ENCODE measurements at regions of chr1 and their contacts with region 1.

Region 1: GRCh38 chr1:180926164-180926981 is 13.7 kb downstream of the KIAA1614 start:
- DNase-seq: no peak
- H3K4me3 ChIP-seq: no peak overlapping the region
- H3K27ac ChIP-seq: no peak overlapping the region
- H3K4me1 ChIP-seq: peaks cover 32 to 59% (median 43%) of the 10 kb centered on the region in 4 experiments
- H3K27me3 ChIP-seq: no peaks in the 10 kb centered on the region; a peak in 1 of 7 replicates
- CTCF ChIP-seq: no peak
- EP300 ChIP-seq: no peak
- POLR2A ChIP-seq: no peak
- RAD21 ChIP-seq: no peak

Region 2: DNA sequence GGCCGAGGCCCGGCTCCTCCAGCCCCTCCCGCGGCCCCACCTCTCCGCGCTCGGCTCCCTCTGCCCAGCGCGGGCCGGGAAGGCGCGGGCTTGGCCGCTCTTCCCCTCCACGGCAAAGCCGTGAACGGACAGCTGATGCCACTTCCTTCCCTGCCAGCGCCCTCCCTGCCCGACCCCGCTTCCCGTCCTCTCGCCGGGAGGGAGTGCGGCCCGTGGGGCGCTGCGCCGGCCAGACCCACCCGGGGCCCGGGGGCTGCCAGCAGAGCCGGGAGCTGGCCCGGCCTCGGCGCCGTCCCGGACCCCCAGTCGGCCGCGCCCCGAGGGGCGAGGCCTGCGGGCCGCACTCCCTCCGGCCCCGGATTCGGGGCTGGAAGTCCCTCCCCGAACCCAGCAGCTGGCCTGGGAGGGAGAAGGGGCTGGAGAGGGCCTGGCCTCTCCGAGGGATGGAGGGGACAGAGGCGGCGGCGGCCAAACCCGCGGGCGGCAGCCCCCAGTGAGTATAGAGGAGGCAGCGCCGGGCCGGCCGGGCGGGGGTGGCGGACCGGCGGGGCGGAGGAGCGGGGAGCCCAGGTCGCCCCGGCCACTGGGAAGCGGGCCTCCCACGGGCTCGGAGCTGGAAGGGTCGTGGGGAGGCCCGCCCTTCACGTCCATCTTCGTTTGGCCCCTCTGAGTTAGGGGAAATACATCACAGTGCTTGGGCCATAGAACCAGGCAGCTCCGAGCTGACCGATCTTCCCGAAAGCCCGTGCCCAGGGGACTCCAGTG is 13.4 kb before region 1 on chr1 and contains the start of gene KIAA1614:
- CTCF ChIA-PET with region 1: interaction called, 12 read pairs
- POLR2A ChIA-PET with region 1: interaction called, 26 read pairs
- DNase-seq: peak in 1 of 2 experiments; percentile 79
- H3K4me3 ChIP-seq: peak within 1 kb of the TSS; percentile 60 to 80 (median 64)
- H3K27ac ChIP-seq: peak within 1 kb of the TSS; percentile 54
- H3K4me1 ChIP-seq: peaks cover 0 to 8% (median 3%) of the 10 kb centered on the region in 4 experiments; a peak in 6 of 7 replicates
- H3K27me3 ChIP-seq: peaks cover 0 to 3% (median under 1%) of the 10 kb centered on the region in 4 experiments; a peak in 5 of 7 replicates
- CTCF ChIP-seq: no peak
- EP300 ChIP-seq: no peak
- POLR2A ChIP-seq: no peak; a peak in 1 of 3 replicates
- RAD21 ChIP-seq: no peak; a peak in 1 of 4 replicates
- total RNA-seq, gene KIAA1614: 2.6 and 3.1 TPM in 2 replicates

Region 3: GRCh38 chr1:180954005-180954800 is 27.8 kb after region 1 on chr1:
- CTCF ChIA-PET with region 1: interaction called, 11 read pairs
- POLR2A ChIA-PET with region 1: interaction called, 7 read pairs
- DNase-seq: no peak
- H3K4me3 ChIP-seq: peak overlapping the region; percentile 10 to 58 (median 12); a peak in 5 of 8 replicates
- H3K27ac ChIP-seq: no peak overlapping the region
- H3K4me1 ChIP-seq: peaks cover 0 to 6% (median 4%) of the 10 kb centered on the region in 4 experiments; a peak in 3 of 7 replicates
- H3K27me3 ChIP-seq: no peaks in the 10 kb centered on the region
- CTCF ChIP-seq: no peak
- EP300 ChIP-seq: no peak
- POLR2A ChIP-seq: no peak
- RAD21 ChIP-seq: no peak

Region 4: GRCh38 chr1:180981596-180982387 is 55.4 kb after region 1 on chr1:
- CTCF ChIA-PET with region 1: no interaction called
- POLR2A ChIA-PET with region 1: no interaction called
- DNase-seq: peak in 1 of 2 experiments; percentile 46
- H3K4me3 ChIP-seq: no peak overlapping the region
- H3K27ac ChIP-seq: no peak overlapping the region
- H3K4me1 ChIP-seq: peaks cover 0 to 8% (median 0%) of the 10 kb centered on the region in 4 experiments; a peak in 4 of 7 replicates
- H3K27me3 ChIP-seq: no peaks in the 10 kb centered on the region
- CTCF ChIP-seq: no peak
- EP300 ChIP-seq: no peak
- POLR2A ChIP-seq: no peak
- RAD21 ChIP-seq: peak; percentile 4 to 16; a peak in 1 of 4 replicates